ENCODE measurements at regions of chr9 and their contacts with region 1.

Region 1: GRCh38 chr9:74497748-74498620 is 849 bp downstream of the RORB start:
- DNase-seq: peak; percentile 62
- H3K4me3 ChIP-seq: peak overlapping the region; percentile 55 to 78
- H3K27ac ChIP-seq: peak overlapping the region in 1 of 2 experiments; percentile 71; a peak in 2 of 4 replicates
- H3K4me1 ChIP-seq: peaks cover 0 to 4% of the 10 kb centered on the region in 2 experiments; a peak in 2 of 4 replicates
- H3K27me3 ChIP-seq: peaks cover 53% of the 10 kb centered on the region
- CTCF ChIP-seq: no peak
- EP300 ChIP-seq: no peak
- RAD21 ChIP-seq: no peak

Region 2: GRCh38 chr9:74534841-74535240 is 36.9 kb after region 1 on chr9:
- CTCF ChIA-PET with region 1: interaction called, 14 read pairs
- POLR2A ChIA-PET with region 1: interaction called, 3 read pairs
- DNase-seq: no peak
- H3K4me3 ChIP-seq: no peak overlapping the region
- H3K27ac ChIP-seq: peak overlapping the region in 1 of 2 experiments; percentile 44; a peak in 1 of 4 replicates
- H3K4me1 ChIP-seq: peaks cover 0 to 12% of the 10 kb centered on the region in 2 experiments; a peak in 2 of 4 replicates
- H3K27me3 ChIP-seq: no peaks in the 10 kb centered on the region
- CTCF ChIP-seq: no peak
- EP300 ChIP-seq: no peak
- RAD21 ChIP-seq: no peak

Region 3: DNA sequence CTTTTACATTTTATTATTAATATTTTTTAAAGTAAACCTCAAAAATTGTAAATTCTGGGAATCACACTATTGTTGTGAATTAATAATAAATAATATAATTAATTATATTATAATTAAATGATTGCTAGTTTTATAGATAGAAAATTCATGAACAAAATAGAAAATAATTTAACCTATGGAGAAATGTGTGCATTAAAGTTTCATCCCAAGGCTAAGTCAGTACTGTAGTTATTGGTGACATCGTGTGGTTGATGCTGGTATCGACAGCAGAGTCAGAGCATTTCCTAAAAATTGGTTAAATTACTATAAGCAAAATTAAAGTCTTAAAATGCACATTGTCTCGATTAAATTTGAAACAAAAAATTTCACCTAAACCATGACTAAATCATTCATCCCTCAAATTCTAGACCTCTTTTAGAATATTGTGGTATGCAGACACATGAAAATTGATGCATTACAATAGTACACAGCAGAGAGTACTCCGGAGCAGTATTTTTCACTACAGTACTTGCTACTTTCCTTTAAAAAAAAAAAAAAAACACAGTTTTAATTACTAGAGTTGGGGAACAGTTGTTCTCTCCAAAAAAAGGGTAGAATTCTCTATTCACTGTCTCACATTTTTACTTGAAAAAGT is 73.0 kb after region 1 on chr9:
- CTCF ChIA-PET with region 1: interaction called, 16 read pairs
- POLR2A ChIA-PET with region 1: interaction called, 9 read pairs
- DNase-seq: peak; percentile 41
- H3K4me3 ChIP-seq: no peak overlapping the region
- H3K27ac ChIP-seq: no peak overlapping the region
- H3K4me1 ChIP-seq: no peaks in the 10 kb centered on the region; a peak in 1 of 4 replicates
- H3K27me3 ChIP-seq: no peaks in the 10 kb centered on the region
- CTCF ChIP-seq: peak; percentile 76
- EP300 ChIP-seq: no peak
- RAD21 ChIP-seq: peak; percentile 92

Measured in SK-N-SH (cell line).